Heart right ventricle (tissue), 16 donors: ENCODE measurements at regions of chr1 and their contacts with region 1.

Region 1: GRCh38 chr1:162422662-162423375 is 10.9 kb upstream of the SH2D1B start:
- DNase-seq: no peak
- ATAC-seq: peak in 1 of 8 donors; percentile 42
- H3K4me3 ChIP-seq: no peak overlapping the region
- H3K27ac ChIP-seq: no peak overlapping the region
- H3K4me1 ChIP-seq: peaks cover 0 to 25% (median 0%) of the 10 kb centered on the region in 9 donors
- H3K27me3 ChIP-seq: no peaks in the 10 kb centered on the region
- CTCF ChIP-seq: no peak

Region 2: GRCh38 chr1:162397039-162397448 is 25.8 kb before region 1 on chr1:
- intact Hi-C with region 1: no loop called
- DNase-seq: no peak
- ATAC-seq: peak in 1 of 8 donors; percentile 41
- H3K4me3 ChIP-seq: no peak overlapping the region
- H3K27ac ChIP-seq: no peak overlapping the region
- H3K4me1 ChIP-seq: peaks cover 0 to under 1% (median 0%) of the 10 kb centered on the region in 9 donors
- H3K27me3 ChIP-seq: peaks cover 3 to 34% (median 25%) of the 10 kb centered on the region in 7 donors
- CTCF ChIP-seq: no peak

Region 3: DNA sequence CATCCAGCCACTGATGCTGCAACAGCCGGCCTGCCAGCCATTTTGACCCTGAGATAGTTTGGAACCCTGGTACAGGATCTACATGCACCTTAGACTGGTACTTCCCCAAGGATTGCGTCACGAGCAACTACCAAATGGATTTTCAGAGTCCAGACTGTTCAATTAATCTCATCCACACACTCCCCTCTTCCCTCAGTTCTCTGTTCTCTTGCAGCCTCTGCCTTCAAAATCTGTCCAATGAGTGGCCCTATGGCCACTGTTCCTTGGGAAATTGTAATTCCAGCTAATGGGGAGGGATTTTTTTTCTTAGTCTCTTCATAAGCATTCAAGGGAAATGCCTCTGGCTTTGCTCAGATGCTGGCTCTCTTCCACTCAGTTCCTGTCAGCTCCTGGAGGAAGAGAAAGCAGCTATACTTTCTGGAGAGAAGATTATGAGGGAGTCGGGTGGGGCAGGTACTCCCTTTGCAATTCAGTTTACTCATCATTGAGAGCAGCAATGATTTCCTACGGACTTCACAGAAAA is 118.9 kb after region 1 on chr1:
- intact Hi-C with region 1: loop called in 1 of 10 experiments (anchors 10 kb)
- DNase-seq: peak in 1 of 2 donors; percentile 65
- ATAC-seq: peak; percentile 71 to 95 (median 90)
- H3K4me3 ChIP-seq: no peak overlapping the region
- H3K27ac ChIP-seq: peak overlapping the region in 9 of 10 donors; percentile 31 to 87 (median 70)
- H3K4me1 ChIP-seq: peaks cover 0 to 11% (median 8%) of the 10 kb centered on the region in 9 donors
- H3K27me3 ChIP-seq: no peaks in the 10 kb centered on the region
- CTCF ChIP-seq: no peak